Ascending aorta (tissue), 2 donors: ENCODE measurements at regions of chr19 and their contacts with region 1.

Region 1: DNA sequence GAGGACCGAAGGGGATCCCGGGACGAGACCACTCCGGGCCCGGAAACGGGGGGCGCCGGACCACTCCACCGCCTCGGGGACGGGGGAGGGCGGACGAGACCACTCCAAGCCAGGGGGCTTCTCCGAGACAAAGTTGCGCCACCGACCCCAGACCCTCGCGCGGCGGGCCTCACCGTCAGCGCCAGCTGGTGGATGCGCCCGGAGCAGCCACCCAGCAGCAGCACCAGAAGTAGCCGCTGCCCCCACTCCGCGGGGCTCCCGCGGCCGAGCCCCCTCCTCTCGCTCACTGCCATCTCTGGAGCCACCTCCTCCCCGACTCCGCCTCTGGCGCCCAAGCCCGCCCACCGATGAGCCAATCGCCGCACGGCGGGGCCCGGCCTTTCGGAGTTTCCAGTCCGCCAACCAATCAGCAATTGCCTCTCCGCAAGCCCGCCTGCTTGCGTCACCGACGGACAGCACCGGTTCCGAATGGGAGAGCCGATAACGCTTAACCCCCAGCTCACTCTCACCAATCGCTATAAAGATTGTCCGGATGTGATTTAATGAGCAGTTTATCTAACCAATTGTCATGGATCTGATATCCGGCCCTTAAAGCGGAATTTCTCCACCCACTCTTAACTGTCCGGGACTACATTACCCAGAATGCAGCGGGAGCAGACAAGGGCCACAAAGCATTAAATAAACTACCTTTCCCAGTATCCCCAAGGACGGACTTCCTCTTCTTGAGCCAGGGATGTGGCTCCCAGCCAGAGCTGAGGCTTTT is at the start of gene GPR108:
- DNase-seq: peak; percentile 99 to 100
- H3K4me3 ChIP-seq: peak within 1 kb of the TSS; percentile 72 to 87
- H3K27ac ChIP-seq: peak within 1 kb of the TSS; percentile 86 to 97
- H3K4me1 ChIP-seq: peaks cover 3 to 30% of the 10 kb centered on the region in 2 donors
- H3K27me3 ChIP-seq: no peaks in the 10 kb centered on the region
- CTCF ChIP-seq: no peak
- total RNA-seq, gene GPR108: 57.6 TPM

Region 2: GRCh38 chr19:5904352-5905113 is 832.9 kb before region 1 on chr19 and contains the start of gene VMAC:
- intact Hi-C with region 1: loop called (anchors 10 kb)
- DNase-seq: peak; percentile 100
- H3K4me3 ChIP-seq: peak within 1 kb of the TSS; percentile 98 to 99
- H3K27ac ChIP-seq: peak within 1 kb of the TSS; percentile 63 to 93
- H3K4me1 ChIP-seq: peaks cover 5 to 25% of the 10 kb centered on the region in 2 donors
- H3K27me3 ChIP-seq: no peaks in the 10 kb centered on the region
- CTCF ChIP-seq: no peak
- total RNA-seq, gene VMAC: 15.2 TPM

Region 3: GRCh38 chr19:6424939-6425731 is 312.3 kb before region 1 on chr19:
- intact Hi-C with region 1: loop called (anchors 10 kb)
- DNase-seq: peak; percentile 100
- H3K4me3 ChIP-seq: peak overlapping the region; percentile 21 to 48
- H3K27ac ChIP-seq: peak overlapping the region; percentile 83 to 87
- H3K4me1 ChIP-seq: peaks cover 13 to 21% of the 10 kb centered on the region in 2 donors
- H3K27me3 ChIP-seq: no peaks in the 10 kb centered on the region
- CTCF ChIP-seq: peak in 1 of 3 experiments; percentile 17

Region 4: GRCh38 chr19:6753178-6754031 is 15.9 kb after region 1 on chr19:
- intact Hi-C with region 1: loop called (anchors 1 kb)
- DNase-seq: peak in 1 of 2 donors; percentile 88
- H3K4me3 ChIP-seq: peak overlapping the region; percentile 51 to 57
- H3K27ac ChIP-seq: peak overlapping the region; percentile 29 to 43
- H3K4me1 ChIP-seq: peaks cover 0 to 8% of the 10 kb centered on the region in 2 donors
- H3K27me3 ChIP-seq: no peaks in the 10 kb centered on the region
- CTCF ChIP-seq: peak; percentile 48 to 66 (median 54)

Region 5: GRCh38 chr19:7515645-7516151 is 778.2 kb after region 1 on chr19 and contains the start of gene ZNF358:
- intact Hi-C with region 1: loop called (anchors 10 kb)
- DNase-seq: peak in 1 of 2 donors; percentile 88
- H3K4me3 ChIP-seq: peak within 1 kb of the TSS; percentile 70 to 97
- H3K27ac ChIP-seq: peak within 1 kb of the TSS; percentile 90 to 96
- H3K4me1 ChIP-seq: peaks cover 6 to 23% of the 10 kb centered on the region in 2 donors
- H3K27me3 ChIP-seq: no peaks in the 10 kb centered on the region
- CTCF ChIP-seq: no peak
- total RNA-seq, gene ZNF358: 163 TPM

Region 6: DNA sequence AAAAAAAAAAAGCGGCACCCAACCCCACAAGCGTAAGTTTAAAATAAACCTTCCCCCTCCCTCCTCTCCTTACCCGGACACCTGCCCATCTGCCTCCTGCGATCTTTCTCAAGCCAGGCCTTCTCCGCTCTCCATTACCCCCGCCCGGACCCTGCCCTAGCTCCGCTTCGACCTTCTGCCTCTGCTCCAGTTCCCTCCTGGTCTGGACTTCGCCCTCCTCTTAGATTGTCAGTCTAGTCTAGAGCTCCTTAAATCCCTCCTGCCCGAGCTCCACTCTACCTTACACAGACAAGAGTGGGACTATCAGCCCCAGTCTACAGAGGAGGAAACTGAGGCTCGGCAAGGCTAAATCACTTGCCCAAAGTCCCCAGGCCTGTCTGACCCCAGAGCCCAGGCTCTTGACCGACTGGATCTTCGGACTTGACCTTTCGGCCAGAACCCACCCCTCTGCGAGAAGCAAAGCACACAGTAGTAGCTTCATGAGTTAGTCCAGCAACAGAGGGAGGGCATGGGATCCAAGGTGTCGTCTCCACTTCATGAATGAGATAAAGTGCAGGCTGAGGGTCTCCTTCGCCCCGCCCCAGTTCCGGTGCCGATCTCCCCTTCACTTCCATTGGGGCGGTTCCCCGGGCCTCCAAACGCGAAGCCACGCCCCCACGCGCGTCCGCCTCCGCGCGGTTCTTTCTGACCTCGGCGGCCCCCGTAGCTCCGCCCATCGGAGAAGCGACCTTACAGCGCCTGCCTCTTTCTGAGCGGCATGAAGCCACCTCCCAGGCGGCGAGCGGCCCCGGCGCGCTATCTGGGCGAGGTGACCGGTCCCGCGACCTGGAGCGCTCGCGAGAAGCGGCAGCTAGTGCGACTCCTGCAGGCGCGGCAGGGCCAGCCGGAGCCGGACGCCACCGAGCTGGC is 1182.4 kb after region 1 on chr19 and contains the start of gene SNAPC2:
- intact Hi-C with region 1: loop called (anchors 2 kb)
- DNase-seq: peak; percentile 81 to 98
- H3K4me3 ChIP-seq: peak within 1 kb of the TSS; percentile 96 to 97
- H3K27ac ChIP-seq: peak within 1 kb of the TSS; percentile 90 to 93
- H3K4me1 ChIP-seq: peaks cover 37 to 39% of the 10 kb centered on the region in 2 donors
- H3K27me3 ChIP-seq: peaks cover 13% of the 10 kb centered on the region
- CTCF ChIP-seq: peak in 1 of 3 experiments; percentile 5
- total RNA-seq, gene SNAPC2: 30.5 TPM